ENCODE measurements at regions of chr9 and their contacts with region 1.

Region 1: GRCh38 chr9:95875305-95876137 is at the start of gene ERCC6L2:
- DNase-seq: peak; percentile 96
- H3K4me3 ChIP-seq: no peak within 1 kb of the TSS
- H3K27ac ChIP-seq: no peak within 1 kb of the TSS
- H3K4me1 ChIP-seq: peaks cover under 1% of the 10 kb centered on the region
- H3K27me3 ChIP-seq: no peaks in the 10 kb centered on the region
- CTCF ChIP-seq: peak in 2 of 4 experiments; percentile 4 to 34
- POLR2A ChIP-seq: peak; percentile 95
- total RNA-seq, gene ERCC6L2: 57.7 to 73.4 TPM

Region 2: DNA sequence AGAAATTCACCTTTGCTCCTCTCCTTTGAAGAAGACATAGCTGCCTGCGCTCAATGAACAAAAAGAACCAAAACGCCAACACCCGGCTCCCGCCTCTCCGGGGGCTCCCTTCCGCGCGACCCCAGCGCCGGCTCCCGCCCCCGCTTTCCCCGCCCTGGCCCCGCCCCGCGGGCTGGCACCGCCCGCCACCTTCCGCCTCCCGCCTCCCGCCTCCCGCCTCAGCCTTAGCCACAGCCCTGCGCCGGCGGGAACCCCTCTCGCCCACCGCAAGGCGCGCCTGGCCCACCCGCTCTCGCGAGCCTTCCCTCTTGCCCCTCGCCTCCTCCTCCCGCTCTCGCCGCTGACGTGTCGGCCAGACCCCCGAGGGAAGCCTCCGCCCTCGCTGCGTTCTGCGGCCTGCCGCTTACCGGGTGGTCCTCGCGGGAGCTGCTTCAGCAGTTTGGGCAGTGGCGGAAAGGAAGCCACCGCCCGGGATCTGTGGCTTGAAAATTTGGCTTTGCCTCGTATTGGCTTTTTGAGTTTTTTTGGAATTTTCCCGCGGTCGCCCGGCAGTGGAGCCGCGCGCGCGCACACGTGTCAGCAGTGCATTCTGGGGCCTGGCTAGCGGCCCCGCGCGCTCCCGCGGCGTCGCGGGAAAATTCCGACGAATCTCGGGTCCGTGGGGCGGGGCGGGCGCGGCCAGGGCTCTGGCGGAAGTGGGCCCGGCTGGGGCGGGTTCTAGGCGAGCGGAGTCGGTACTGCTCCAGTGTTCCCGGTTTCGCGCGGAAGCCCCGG is 558.2 kb before region 1 on chr9 and contains the start of gene FANCC:
- intact Hi-C with region 1: loop called (anchors 5 kb)
- DNase-seq: peak; percentile 90
- H3K4me3 ChIP-seq: peak within 1 kb of the TSS; percentile 94 to 99
- H3K27ac ChIP-seq: peak within 1 kb of the TSS; percentile 94 to 97
- H3K4me1 ChIP-seq: no peaks in the 10 kb centered on the region
- H3K27me3 ChIP-seq: no peaks in the 10 kb centered on the region
- CTCF ChIP-seq: no peak
- POLR2A ChIP-seq: no peak
- total RNA-seq, gene FANCC: 4.9 to 21.2 TPM

Region 3: DNA sequence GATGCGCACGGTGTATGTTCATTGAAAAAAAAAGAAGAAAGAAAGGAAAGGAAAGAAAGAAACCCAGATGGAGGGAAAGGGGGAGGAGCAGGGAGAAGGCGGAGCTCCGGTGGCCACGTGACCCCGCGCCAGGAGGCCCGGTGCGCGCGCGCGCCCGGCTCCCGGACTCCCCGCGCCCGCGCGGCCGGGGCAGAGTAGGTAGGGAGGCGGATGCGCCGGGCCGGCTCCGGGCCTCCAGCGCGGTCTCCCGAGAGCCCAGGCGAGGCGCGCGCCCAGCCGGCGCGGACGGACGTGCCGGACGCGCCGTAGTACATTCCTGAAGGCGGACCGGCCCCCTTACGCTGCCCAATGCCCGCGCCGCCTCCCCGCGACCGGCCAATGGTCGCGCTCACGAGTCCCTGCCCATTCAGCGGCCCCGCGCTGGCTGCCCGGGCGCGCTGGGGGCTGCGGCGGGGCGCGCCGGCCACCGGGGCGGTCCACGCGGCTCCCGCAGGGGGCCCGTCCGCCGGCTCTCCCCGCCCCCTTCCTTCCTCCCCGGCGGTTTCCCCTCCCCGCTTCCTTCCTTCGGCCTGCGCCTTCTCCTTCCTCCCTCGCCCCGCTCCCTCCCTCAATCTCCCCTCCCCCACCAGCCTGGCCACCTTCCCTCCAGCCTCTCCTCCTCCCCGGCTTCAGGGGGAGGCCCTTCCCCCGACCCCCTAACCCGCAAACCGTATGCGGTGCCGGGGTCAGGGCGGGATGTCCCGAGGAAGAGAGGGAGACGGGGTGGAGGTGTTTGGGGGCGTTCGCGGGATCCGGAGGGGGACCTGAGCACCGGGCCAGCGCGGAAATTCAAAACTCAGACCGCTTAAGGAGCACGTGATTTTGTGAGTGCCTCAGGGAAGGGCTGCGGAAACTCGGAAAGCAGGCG is 364.6 kb before region 1 on chr9:
- intact Hi-C with region 1: loop called (anchors 5 kb)
- DNase-seq: peak; percentile 92
- H3K4me3 ChIP-seq: peak overlapping the region; percentile 77 to 85
- H3K27ac ChIP-seq: peak overlapping the region; percentile 94
- H3K4me1 ChIP-seq: no peaks in the 10 kb centered on the region
- H3K27me3 ChIP-seq: no peaks in the 10 kb centered on the region
- CTCF ChIP-seq: peak in 1 of 4 experiments; percentile 3
- POLR2A ChIP-seq: peak; percentile 90

Region 4: DNA sequence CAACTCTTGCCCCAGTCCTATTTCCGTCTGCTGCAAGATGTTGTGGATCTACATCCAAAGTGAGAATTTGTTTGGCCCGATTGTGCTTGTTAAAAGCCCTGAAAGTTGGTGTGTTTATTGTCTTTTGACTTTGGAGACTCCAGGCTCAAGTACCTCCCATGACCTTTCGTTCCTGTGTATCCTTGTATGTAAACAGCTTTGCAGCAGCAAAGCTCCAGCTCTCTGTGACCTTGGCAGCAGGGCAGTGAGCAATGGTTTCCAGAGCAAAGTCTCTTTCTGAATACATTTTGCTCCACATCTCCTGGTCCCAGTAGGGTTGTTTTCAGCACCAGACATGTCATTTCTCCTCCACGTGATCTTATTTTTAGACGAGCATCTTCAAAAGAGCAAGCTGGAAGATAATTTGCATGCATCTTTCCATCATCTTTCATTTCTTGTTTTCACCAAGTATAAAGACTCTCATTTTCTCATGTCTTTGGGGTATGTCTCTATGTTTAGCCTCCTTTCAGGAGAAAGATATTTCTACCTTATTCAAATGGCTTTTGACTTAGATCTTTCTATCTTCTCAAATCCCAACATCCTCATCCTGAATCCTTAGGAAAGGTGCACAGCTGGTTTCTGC is 68.1 kb before region 1 on chr9:
- intact Hi-C with region 1: loop called (anchors 2 kb)
- DNase-seq: no peak
- H3K4me3 ChIP-seq: no peak overlapping the region
- H3K27ac ChIP-seq: peak overlapping the region; percentile 46 to 57
- H3K4me1 ChIP-seq: no peaks in the 10 kb centered on the region
- H3K27me3 ChIP-seq: no peaks in the 10 kb centered on the region
- CTCF ChIP-seq: no peak
- POLR2A ChIP-seq: no peak

Region 5: GRCh38 chr9:96020792-96021550 is 145.4 kb after region 1 on chr9:
- intact Hi-C with region 1: loop called (anchors 10 kb)
- DNase-seq: no peak
- H3K4me3 ChIP-seq: peak overlapping the region; percentile 48 to 51
- H3K27ac ChIP-seq: peak overlapping the region; percentile 84
- H3K4me1 ChIP-seq: no peaks in the 10 kb centered on the region
- H3K27me3 ChIP-seq: no peaks in the 10 kb centered on the region
- CTCF ChIP-seq: peak in 1 of 4 experiments; percentile 25
- POLR2A ChIP-seq: peak; percentile 31

Region 6: DNA sequence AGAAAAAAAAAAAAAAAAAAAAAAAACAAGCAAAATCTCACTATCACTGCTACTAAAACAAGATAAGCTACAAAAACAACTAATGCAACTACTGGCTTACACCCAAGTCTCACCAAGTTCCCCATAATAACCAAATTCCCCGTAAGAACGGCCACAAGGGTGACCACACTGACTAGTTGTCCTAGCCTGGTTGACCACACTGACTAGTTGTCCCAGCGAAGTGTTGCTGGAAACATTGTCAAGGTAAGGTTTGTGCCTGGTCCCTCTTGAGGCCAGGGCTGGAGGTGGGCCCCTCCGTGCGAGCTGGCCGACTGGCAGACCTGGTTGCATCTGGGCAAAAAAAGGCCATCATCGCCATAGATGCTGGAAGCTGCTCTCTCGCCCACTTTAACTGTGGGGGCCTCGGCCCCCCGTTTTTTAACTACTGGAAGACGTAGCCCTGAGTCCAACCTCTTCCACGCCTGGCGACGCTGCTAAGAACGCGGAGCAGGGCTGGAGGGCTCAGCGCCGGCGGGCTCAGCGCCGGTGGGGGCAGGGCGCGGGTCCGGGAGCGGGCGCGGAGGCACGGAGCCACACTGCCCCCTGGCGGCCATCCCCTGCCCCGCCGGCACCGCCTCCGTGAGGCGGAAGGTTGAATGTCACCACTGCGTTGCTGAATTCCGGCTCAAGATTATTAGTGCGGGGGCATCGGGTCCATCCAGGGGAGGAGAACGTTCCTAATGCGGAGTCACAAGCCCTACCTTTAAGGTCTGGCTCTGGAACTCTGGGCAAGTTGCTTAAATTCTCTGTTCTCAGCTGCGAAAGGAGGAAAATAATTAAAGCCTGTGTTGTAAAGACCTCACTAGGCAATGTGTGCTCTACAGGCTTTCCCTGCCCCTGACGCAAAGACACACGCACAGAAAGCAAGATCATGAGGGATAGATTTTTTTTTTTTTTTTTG is 342.5 kb after region 1 on chr9:
- intact Hi-C with region 1: loop called (anchors 10 kb)
- DNase-seq: peak; percentile 59
- H3K4me3 ChIP-seq: peak overlapping the region; percentile 4 to 15
- H3K27ac ChIP-seq: peak overlapping the region; percentile 46 to 58
- H3K4me1 ChIP-seq: no peaks in the 10 kb centered on the region
- H3K27me3 ChIP-seq: no peaks in the 10 kb centered on the region
- CTCF ChIP-seq: peak; percentile 98 to 99 (median 98)
- POLR2A ChIP-seq: no peak

Measured in prostate gland (tissue), 2 donors.